ENCODE measurements at regions of chr4 and their contacts with region 1.

Region 1: DNA sequence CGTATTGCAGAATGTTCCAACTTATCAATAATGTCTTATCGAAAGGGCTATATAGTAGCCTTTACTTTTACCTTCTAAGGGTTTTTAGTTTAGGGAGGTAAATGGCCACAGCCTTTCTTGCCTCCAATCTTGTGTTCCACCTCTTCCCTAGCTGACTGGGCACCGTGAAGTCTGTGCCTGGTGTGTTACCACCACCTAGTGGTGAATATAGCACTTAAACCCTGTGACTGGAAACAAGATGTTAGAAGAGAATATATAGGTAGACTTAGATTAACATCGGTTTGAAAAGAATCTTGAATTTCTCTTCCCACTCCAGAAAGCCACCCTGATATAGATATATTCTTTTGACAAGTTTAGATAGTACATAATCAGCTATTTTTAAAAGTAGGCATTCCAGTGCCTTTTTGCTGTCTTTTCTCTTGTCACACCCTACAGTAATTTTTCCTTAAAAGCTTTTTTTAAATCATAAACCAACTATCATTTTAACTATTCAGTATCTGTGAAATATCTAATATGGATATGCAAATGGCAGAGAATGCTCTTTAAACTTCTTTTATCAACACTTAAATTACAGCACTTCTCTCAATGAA is 27.8 kb upstream of the ADH7 start:
- DNase-seq: no peak
- ATAC-seq: peak; percentile 64
- H3K4me3 Mint-ChIP-seq: no peak overlapping the region
- H3K27ac Mint-ChIP-seq: no peak overlapping the region
- H3K4me1 Mint-ChIP-seq: no peaks in the 10 kb centered on the region
- H3K27me3 Mint-ChIP-seq: peaks cover 10% of the 10 kb centered on the region
- CTCF ChIP-seq: no peak

Region 2: DNA sequence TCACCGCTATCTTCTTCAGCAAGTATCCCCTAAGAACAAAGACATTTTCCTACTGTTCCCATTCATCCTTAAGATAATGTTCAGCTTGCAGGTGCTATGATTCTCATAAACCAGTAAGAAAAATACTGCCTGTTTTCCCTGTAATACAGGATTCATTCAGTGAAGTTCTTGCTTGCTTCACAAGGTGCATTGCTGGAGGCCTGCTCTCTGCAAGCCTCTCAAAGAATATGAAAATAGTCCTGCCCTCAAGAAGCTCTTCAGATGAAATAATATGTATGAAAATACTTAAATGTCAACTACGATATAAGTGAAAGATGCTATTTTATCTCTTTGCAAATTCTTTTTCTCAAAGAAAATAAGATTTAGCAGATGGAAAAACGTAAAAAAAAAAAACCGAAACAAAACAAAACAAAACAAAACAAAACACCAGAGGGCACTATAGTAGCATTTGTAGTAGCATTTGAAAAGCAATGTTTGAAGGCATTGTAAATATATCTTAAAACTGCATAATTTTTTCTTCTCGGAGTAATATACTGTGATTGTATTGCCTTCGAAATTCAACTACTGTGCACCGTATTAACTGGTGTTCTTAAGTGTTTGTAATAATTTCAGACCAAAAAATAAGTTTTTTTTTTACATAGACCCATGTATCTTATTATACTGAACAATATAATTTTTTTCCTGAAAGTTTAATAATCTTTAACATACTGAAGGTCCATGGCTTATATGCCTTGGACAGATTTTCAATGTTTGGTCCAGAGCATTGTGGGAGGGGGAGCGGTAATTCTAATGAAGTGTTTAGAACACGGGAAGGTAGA is 344.9 kb before region 1 on chr4:
- CTCF ChIA-PET with region 1: interaction called, 3 read pairs
- POLR2A ChIA-PET with region 1: no interaction called
- intact Hi-C with region 1: loop called (anchors 1 kb)
- DNase-seq: no peak
- ATAC-seq: no peak
- H3K4me3 Mint-ChIP-seq: no peak overlapping the region
- H3K27ac Mint-ChIP-seq: no peak overlapping the region
- H3K4me1 Mint-ChIP-seq: no peaks in the 10 kb centered on the region
- H3K27me3 Mint-ChIP-seq: peaks cover 2% of the 10 kb centered on the region
- CTCF ChIP-seq: no peak

Region 3: DNA sequence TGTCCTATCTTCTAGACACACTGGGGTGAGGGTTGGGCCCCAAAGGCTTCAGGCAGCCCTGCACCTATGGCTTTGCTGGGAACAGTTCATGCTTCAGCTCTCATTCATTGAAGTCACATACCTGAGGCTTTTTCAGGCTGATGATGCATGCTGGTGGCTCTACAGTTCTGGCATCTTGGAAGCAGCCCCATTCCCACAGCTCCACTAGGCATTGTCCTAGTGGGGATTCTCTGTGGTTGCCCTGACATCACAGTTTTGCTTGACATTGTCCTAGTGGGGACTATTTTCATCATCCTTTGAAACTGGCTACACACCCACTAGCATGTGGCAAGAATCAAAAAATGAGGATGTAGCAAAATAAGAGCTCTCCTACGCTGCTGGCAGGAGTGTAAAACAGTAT is 10.2 kb after region 1 on chr4:
- CTCF ChIA-PET with region 1: no interaction called
- POLR2A ChIA-PET with region 1: no interaction called
- intact Hi-C with region 1: no loop called
- DNase-seq: no peak
- ATAC-seq: no peak
- H3K4me3 Mint-ChIP-seq: no peak overlapping the region
- H3K27ac Mint-ChIP-seq: no peak overlapping the region
- H3K4me1 Mint-ChIP-seq: no peaks in the 10 kb centered on the region
- H3K27me3 Mint-ChIP-seq: peaks cover 13% of the 10 kb centered on the region
- CTCF ChIP-seq: no peak

Region 4: GRCh38 chr4:99885063-99885664 is 422.2 kb after region 1 on chr4:
- CTCF ChIA-PET with region 1: interaction called, 3 read pairs
- POLR2A ChIA-PET with region 1: no interaction called
- intact Hi-C with region 1: loop called (anchors 1 kb)
- DNase-seq: no peak
- ATAC-seq: no peak
- H3K4me3 Mint-ChIP-seq: no peak overlapping the region
- H3K27ac Mint-ChIP-seq: no peak overlapping the region
- H3K4me1 Mint-ChIP-seq: no peaks in the 10 kb centered on the region
- H3K27me3 Mint-ChIP-seq: no peaks in the 10 kb centered on the region
- CTCF ChIP-seq: no peak